AG04450 (cell line): ENCODE measurements at regions of chr10 and their contacts with region 1.

Region 1: DNA sequence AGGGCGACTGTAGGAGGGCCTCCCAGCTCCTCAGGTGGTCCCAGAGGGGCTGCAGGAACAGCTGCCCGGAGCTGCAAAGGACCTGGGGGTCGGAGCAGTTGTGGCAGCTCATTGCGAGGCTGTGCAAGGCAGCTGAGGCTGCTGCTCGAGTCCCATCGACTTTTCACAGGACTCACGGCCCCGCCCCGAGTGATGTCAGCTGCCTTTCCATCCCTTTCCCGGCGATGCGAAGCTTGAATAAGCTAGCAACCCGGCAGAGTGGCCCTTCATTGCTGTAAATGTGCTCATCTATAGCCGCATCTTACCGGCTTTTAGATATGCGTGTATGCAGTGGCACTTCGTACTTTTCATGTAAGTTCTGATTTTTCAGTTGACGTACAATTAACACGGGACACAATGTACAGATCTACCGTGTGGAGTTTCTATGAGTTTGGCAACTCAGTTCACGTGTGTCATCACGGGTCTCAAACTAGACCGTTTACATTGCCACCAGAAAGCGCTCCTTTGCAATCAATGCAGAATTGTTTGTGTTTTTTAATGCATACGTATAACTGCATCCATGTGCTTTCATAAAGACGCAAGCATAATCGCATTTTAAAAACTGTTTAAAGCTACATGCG is at the start of gene CH25H:
- DNase-seq: no peak
- H3K4me3 ChIP-seq: peak within 1 kb of the TSS; percentile 61
- H3K27ac ChIP-seq: peak within 1 kb of the TSS; percentile 34
- H3K27me3 ChIP-seq: no peaks in the 10 kb centered on the region
- CTCF ChIP-seq: no peak
- polyA plus RNA-seq, gene CH25H: 0.71 and 1.1 TPM in 2 replicates

Region 2: DNA sequence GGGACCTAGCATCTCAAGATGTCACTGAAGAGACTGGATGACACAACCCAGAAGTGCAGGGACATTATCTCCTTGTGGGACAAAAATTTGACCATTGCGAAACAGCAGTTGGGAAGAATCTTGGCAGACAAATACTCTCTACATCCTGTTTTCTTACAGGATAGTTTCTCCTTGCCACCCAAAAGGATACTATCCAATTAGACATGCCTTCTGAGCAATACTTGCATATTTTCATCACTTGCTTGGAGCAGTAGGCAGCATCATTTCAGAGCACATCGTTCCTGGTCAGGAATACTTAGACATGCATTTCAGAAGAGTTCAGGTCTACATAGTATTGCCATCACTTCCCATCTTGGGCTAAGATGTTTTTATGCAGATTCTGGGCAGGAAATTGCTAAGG is 159.9 kb before region 1 on chr10:
- CTCF ChIA-PET with region 1: interaction called, 10 read pairs
- POLR2A ChIA-PET with region 1: no interaction called
- DNase-seq: no peak
- H3K4me3 ChIP-seq: no peak overlapping the region
- H3K27ac ChIP-seq: no peak overlapping the region
- H3K27me3 ChIP-seq: no peaks in the 10 kb centered on the region
- CTCF ChIP-seq: no peak